HepG2 (cell line): ENCODE measurements at regions of chr1 and their contacts with region 1.

Region 1: DNA sequence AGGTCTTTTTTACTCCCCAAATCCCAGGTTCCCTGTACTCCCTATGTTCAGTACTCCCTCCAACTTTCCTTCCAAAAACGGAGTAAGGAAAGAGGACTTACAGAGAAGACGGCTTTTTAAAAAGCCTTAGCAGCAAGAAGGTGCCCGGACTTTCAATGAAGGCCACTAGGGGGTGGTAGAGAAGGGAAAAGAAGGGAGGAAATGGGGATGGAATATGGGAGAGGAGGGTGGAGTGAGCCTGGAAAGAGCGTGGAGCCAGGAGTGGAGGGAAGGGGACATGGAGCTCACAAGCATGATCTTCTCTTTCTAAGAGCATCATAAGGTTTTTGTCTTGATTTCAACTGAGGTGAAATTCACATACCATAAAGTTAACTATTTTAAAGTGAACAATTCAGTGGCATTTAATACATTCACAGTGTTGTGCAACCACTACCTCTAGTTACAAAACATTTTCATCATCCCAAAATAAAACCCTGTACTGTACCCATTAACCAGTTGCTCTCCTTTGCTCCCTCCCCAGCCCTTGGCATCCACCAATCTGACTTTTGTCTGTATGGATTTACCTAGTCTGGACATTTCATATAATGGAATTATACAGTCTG is 129.9 kb downstream of the ZNF281 start:
- DNase-seq: peak; percentile 64
- ATAC-seq: peak; percentile 74
- H3K4me3 ChIP-seq: no peak overlapping the region
- H3K27ac ChIP-seq: no peak overlapping the region
- H3K4me1 ChIP-seq: peaks cover 20% of the 10 kb centered on the region
- H3K27me3 ChIP-seq: no peaks in the 10 kb centered on the region
- CTCF ChIP-seq: peak; percentile 85
- EP300 ChIP-seq: no peak
- POLR2A ChIP-seq: no peak
- RAD21 ChIP-seq: peak; percentile 69

Region 2: GRCh38 chr1:199684686-199685273 is 595.1 kb before region 1 on chr1:
- CTCF ChIA-PET with region 1: no interaction called
- POLR2A ChIA-PET with region 1: no interaction called
- in situ Hi-C with region 1: no loop called
- intact Hi-C with region 1: loop called (anchors 2 kb)
- DNase-seq: peak; percentile 25
- ATAC-seq: peak; percentile 91
- H3K4me3 ChIP-seq: no peak overlapping the region
- H3K27ac ChIP-seq: no peak overlapping the region
- H3K4me1 ChIP-seq: no peaks in the 10 kb centered on the region
- H3K27me3 ChIP-seq: no peaks in the 10 kb centered on the region; a peak in 1 of 5 replicates
- CTCF ChIP-seq: peak; percentile 77
- EP300 ChIP-seq: no peak
- POLR2A ChIP-seq: no peak
- RAD21 ChIP-seq: peak; percentile 40

Region 3: DNA sequence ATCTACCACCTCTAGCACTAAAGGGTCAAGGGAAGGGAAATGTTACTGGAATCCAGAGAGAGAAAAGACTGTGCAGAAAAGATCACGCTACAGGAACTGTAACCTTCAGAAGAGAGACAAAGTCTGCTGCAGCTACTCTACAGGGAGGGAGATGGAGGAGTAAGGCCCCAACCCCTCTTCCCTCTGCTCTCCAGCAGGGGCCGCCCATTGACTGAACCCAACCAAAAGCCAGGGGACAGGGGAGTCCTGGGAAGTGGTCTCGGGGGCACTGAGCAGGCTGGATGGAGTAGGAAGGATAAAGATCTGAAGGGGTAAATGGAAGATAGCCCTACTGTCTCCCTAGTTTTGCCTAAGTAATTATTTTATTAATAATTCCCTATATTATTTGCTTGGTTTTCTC is 325.2 kb before region 1 on chr1:
- CTCF ChIA-PET with region 1: no interaction called
- POLR2A ChIA-PET with region 1: no interaction called
- in situ Hi-C with region 1: no loop called
- intact Hi-C with region 1: loop called (anchors 1 kb)
- DNase-seq: peak; percentile 10
- ATAC-seq: peak; percentile 99
- H3K4me3 ChIP-seq: no peak overlapping the region
- H3K27ac ChIP-seq: no peak overlapping the region
- H3K4me1 ChIP-seq: no peaks in the 10 kb centered on the region
- H3K27me3 ChIP-seq: no peaks in the 10 kb centered on the region
- CTCF ChIP-seq: peak; percentile 72
- EP300 ChIP-seq: no peak
- POLR2A ChIP-seq: no peak
- RAD21 ChIP-seq: no peak

Region 4: GRCh38 chr1:200139661-200140250 is 140.2 kb before region 1 on chr1:
- CTCF ChIA-PET with region 1: no interaction called
- POLR2A ChIA-PET with region 1: no interaction called
- in situ Hi-C with region 1: no loop called
- intact Hi-C with region 1: loop called (anchors 2 kb)
- DNase-seq: peak; percentile 61
- ATAC-seq: peak; percentile 94
- H3K4me3 ChIP-seq: no peak overlapping the region
- H3K27ac ChIP-seq: no peak overlapping the region
- H3K4me1 ChIP-seq: no peaks in the 10 kb centered on the region
- H3K27me3 ChIP-seq: no peaks in the 10 kb centered on the region; a peak in 1 of 5 replicates
- CTCF ChIP-seq: peak; percentile 73
- EP300 ChIP-seq: no peak
- POLR2A ChIP-seq: no peak
- RAD21 ChIP-seq: 0 out of 2 replicates have a peak, but pooled peaks have one; percentile 17

Region 5: GRCh38 chr1:200258447-200259375 is 21.2 kb before region 1 on chr1:
- CTCF ChIA-PET with region 1: interaction called, 4 read pairs
- POLR2A ChIA-PET with region 1: interaction called, 22 read pairs
- in situ Hi-C with region 1: no loop called
- intact Hi-C with region 1: loop called (anchors 2 kb)
- DNase-seq: peak; percentile 52
- ATAC-seq: peak; percentile 70
- H3K4me3 ChIP-seq: no peak overlapping the region
- H3K27ac ChIP-seq: no peak overlapping the region
- H3K4me1 ChIP-seq: peaks cover 46% of the 10 kb centered on the region
- H3K27me3 ChIP-seq: no peaks in the 10 kb centered on the region; a peak in 2 of 5 replicates
- CTCF ChIP-seq: peak; percentile 51
- EP300 ChIP-seq: no peak
- POLR2A ChIP-seq: no peak
- RAD21 ChIP-seq: 0 out of 2 replicates have a peak, but pooled peaks have one; percentile 21

Region 6: DNA sequence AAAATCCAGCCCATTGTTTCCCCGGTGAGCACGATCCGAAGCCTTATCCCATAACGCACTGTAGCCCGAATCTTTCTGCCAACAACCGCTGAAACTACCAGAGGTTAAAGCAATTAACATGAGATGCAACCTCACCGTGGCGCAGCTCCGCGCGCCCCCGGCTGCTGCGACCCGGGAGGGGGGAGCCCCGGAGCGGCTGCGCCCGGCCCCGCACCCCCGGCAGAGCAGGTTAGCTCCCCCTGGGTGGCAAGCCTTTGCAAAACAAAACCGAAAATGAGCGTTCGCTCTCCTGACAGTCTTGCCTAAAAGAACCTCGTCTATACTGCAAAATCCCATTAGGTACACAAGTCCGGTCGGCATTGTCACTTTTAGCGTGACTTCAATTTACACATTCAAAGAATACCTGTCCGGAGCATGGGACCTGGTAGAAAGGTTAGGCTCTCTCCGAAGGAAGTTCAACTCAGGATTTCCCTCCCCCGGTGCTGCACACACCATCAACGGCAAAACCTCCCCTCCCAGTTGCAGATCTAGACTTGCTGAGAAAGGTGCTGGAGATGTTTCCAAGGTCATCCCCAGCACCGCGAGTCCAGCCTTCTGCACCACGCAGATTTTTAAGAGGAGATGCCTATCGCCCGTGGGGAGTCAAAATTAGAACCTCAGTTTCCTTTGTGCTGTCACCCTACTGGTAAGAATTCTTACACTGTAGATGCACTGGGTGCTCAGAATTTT is 22.4 kb after region 1 on chr1:
- CTCF ChIA-PET with region 1: interaction called, 5 read pairs
- POLR2A ChIA-PET with region 1: no interaction called
- in situ Hi-C with region 1: no loop called
- intact Hi-C with region 1: loop called (anchors 1 kb)
- DNase-seq: no peak
- ATAC-seq: peak; percentile 84
- H3K4me3 ChIP-seq: peak overlapping the region; percentile 53 to 73 (median 67)
- H3K27ac ChIP-seq: no peak overlapping the region
- H3K4me1 ChIP-seq: peaks cover 39% of the 10 kb centered on the region
- H3K27me3 ChIP-seq: peaks cover 0 to 14% of the 10 kb centered on the region in 2 experiments; a peak in 2 of 5 replicates
- CTCF ChIP-seq: peak; percentile 23; the same call in 1 of the 2 replicates
- EP300 ChIP-seq: no peak
- POLR2A ChIP-seq: no peak
- RAD21 ChIP-seq: peak; percentile 34; the same call in 1 of the 2 replicates

Region 7: GRCh38 chr1:200351826-200352549 is 72.1 kb after region 1 on chr1:
- CTCF ChIA-PET with region 1: no interaction called
- POLR2A ChIA-PET with region 1: no interaction called
- in situ Hi-C with region 1: no loop called
- intact Hi-C with region 1: no loop called
- DNase-seq: no peak
- ATAC-seq: peak; percentile 40; the same call in 1 of the 3 replicates
- H3K4me3 ChIP-seq: no peak overlapping the region
- H3K27ac ChIP-seq: no peak overlapping the region
- H3K4me1 ChIP-seq: peaks cover 15% of the 10 kb centered on the region
- H3K27me3 ChIP-seq: no peaks in the 10 kb centered on the region
- CTCF ChIP-seq: no peak
- EP300 ChIP-seq: no peak
- POLR2A ChIP-seq: no peak
- RAD21 ChIP-seq: no peak

Region 8: GRCh38 chr1:200445213-200445612 is 165.3 kb after region 1 on chr1:
- CTCF ChIA-PET with region 1: no interaction called
- POLR2A ChIA-PET with region 1: no interaction called
- in situ Hi-C with region 1: no loop called
- intact Hi-C with region 1: no loop called
- DNase-seq: no peak
- ATAC-seq: no peak
- H3K4me3 ChIP-seq: no peak overlapping the region
- H3K27ac ChIP-seq: no peak overlapping the region
- H3K4me1 ChIP-seq: no peaks in the 10 kb centered on the region
- H3K27me3 ChIP-seq: no peaks in the 10 kb centered on the region
- CTCF ChIP-seq: no peak
- EP300 ChIP-seq: no peak
- POLR2A ChIP-seq: no peak
- RAD21 ChIP-seq: no peak

Region 9: GRCh38 chr1:200473698-200474371 is 193.9 kb after region 1 on chr1:
- CTCF ChIA-PET with region 1: no interaction called
- POLR2A ChIA-PET with region 1: no interaction called
- in situ Hi-C with region 1: no loop called
- intact Hi-C with region 1: no loop called
- DNase-seq: no peak
- ATAC-seq: no peak
- H3K4me3 ChIP-seq: no peak overlapping the region
- H3K27ac ChIP-seq: no peak overlapping the region
- H3K4me1 ChIP-seq: peaks cover 16% of the 10 kb centered on the region
- H3K27me3 ChIP-seq: peaks cover 2 to 9% of the 10 kb centered on the region in 2 experiments; a peak in 3 of 5 replicates
- CTCF ChIP-seq: no peak
- EP300 ChIP-seq: no peak
- POLR2A ChIP-seq: no peak
- RAD21 ChIP-seq: no peak

Region 10: GRCh38 chr1:200510228-200510623 is 230.3 kb after region 1 on chr1:
- CTCF ChIA-PET with region 1: interaction called, 9 read pairs
- POLR2A ChIA-PET with region 1: no interaction called
- in situ Hi-C with region 1: no loop called
- intact Hi-C with region 1: loop called (anchors 1 kb)
- DNase-seq: peak; percentile 78
- ATAC-seq: peak; percentile 98
- H3K4me3 ChIP-seq: no peak overlapping the region
- H3K27ac ChIP-seq: no peak overlapping the region
- H3K4me1 ChIP-seq: peaks cover 11% of the 10 kb centered on the region; the same call in 1 of the 2 replicates
- H3K27me3 ChIP-seq: peaks cover 0 to 10% of the 10 kb centered on the region in 2 experiments; a peak in 3 of 5 replicates
- CTCF ChIP-seq: peak; percentile 88
- EP300 ChIP-seq: no peak
- POLR2A ChIP-seq: no peak
- RAD21 ChIP-seq: peak; percentile 74